SK-N-SH (cell line): ENCODE measurements at regions of chr5 and their contacts with region 1.

Region 1: GRCh38 chr5:74640450-74640953 is at the start of gene ENC1:
- DNase-seq: peak; percentile 88
- H3K4me3 ChIP-seq: peak within 1 kb of the TSS; percentile 84 to 87
- H3K27ac ChIP-seq: peak within 1 kb of the TSS; percentile 90 to 94
- H3K4me1 ChIP-seq: peaks cover 22 to 24% of the 10 kb centered on the region in 2 experiments
- H3K27me3 ChIP-seq: no peaks in the 10 kb centered on the region
- CTCF ChIP-seq: peak; percentile 44
- EP300 ChIP-seq: peak in 1 of 2 experiments; percentile 30; a peak in 1 of 4 replicates
- RAD21 ChIP-seq: peak; percentile 44; the same call in 1 of the 2 replicates
- polyA plus RNA-seq, gene ENC1: 20.3 and 23.9 TPM in 2 replicates

Region 2: GRCh38 chr5:73908395-73908794 is 732.1 kb before region 1 on chr5:
- CTCF ChIA-PET with region 1: interaction called, 124 read pairs
- POLR2A ChIA-PET with region 1: no interaction called
- DNase-seq: peak; percentile 39
- H3K4me3 ChIP-seq: no peak overlapping the region
- H3K27ac ChIP-seq: peak overlapping the region in 1 of 2 experiments; percentile 9; a peak in 1 of 4 replicates
- H3K4me1 ChIP-seq: peaks cover 0 to 6% of the 10 kb centered on the region in 2 experiments; a peak in 3 of 4 replicates
- H3K27me3 ChIP-seq: no peaks in the 10 kb centered on the region
- CTCF ChIP-seq: no peak
- EP300 ChIP-seq: peak in 1 of 2 experiments; percentile 58; a peak in 2 of 4 replicates
- RAD21 ChIP-seq: no peak

Region 3: DNA sequence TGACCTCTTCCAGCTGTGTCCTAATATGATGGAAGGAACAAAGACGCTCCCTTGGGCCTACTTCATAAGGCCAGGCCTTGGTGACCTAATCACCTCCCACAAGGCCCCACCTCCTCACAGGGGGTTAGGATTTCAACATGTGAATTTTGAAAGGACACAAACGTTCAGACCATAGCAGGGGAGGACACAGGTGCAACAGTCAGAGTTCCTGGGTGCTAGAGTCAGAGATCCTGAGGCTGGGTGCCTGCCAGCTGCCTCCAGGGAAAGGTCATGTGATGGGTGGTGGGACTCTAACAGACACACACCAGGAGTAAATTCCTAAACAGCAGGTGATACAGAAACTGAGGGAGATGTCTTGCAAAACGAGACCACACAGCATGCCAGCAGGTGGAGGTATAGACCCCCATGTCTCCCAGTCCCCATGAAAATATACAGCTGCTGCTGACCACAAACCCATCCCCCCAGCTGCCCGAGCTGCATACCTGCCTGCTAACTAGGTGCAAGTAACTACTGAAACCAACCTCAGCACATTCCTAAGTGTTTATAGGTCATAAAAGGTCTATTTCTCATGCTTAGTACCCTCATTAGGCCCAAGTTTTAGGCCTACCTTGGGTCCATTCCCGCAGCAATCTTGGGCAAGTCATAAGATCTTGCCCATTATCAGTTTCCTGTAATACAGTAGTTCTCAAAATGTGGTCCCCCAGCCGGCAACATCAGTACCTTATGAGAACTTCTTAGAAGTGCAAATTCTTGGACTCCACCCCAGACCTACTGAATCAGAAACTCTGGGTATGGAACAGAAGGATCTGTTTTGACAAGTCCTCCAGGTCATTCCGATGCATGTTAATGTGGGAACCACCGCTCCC is 245.4 kb before region 1 on chr5:
- CTCF ChIA-PET with region 1: interaction called, 15 read pairs
- POLR2A ChIA-PET with region 1: no interaction called
- DNase-seq: peak; percentile 19
- H3K4me3 ChIP-seq: no peak overlapping the region
- H3K27ac ChIP-seq: no peak overlapping the region
- H3K4me1 ChIP-seq: peaks cover 7 to 8% of the 10 kb centered on the region in 2 experiments; a peak in 3 of 4 replicates
- H3K27me3 ChIP-seq: no peaks in the 10 kb centered on the region
- CTCF ChIP-seq: no peak
- EP300 ChIP-seq: no peak
- RAD21 ChIP-seq: peak; percentile 46; the same call in 1 of the 2 replicates

Region 4: DNA sequence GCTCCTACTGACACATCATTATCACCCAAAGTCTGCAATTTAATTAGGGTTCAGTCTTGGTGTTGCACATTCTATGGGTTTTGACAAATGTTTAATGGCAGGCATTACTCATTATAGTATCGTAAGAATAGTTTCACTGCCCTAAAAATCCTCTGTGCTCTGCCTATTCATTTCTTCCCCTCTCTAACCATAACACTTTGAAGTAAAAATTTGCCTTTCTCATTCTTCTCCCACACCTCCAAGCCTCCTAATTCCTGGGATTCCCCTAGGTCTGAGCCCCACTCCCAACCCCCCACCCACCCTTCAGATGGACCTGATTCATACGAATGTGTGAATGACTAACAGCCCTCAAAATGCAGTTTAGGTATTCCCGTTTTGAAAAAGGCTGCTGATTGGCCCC is 18.4 kb before region 1 on chr5:
- CTCF ChIA-PET with region 1: interaction called, 19 read pairs
- POLR2A ChIA-PET with region 1: no interaction called
- DNase-seq: no peak
- H3K4me3 ChIP-seq: no peak overlapping the region
- H3K27ac ChIP-seq: no peak overlapping the region
- H3K4me1 ChIP-seq: peaks cover 0 to 18% of the 10 kb centered on the region in 2 experiments; a peak in 2 of 4 replicates
- H3K27me3 ChIP-seq: no peaks in the 10 kb centered on the region
- CTCF ChIP-seq: no peak
- EP300 ChIP-seq: no peak
- RAD21 ChIP-seq: no peak

Region 5: DNA sequence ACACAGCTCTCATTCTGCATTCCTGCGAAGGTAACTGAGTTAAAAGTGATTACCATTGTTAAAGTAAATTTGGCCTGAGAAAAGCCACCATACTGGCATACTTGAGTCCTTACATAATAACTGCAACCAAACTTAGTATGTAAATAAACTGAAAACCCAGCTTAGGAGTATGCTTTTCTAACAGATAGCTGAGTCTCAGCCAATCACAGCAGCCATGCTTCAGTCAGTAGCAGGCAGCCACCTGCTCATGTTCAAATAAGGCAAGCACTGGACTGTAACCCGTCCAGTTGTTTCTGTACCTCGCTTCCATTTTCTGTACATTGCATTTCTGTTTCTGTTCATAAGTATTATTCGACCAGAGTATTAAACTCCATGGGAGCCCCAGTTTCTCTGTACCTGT is 353.2 kb after region 1 on chr5:
- CTCF ChIA-PET with region 1: no interaction called
- POLR2A ChIA-PET with region 1: no interaction called
- DNase-seq: no peak
- H3K4me3 ChIP-seq: no peak overlapping the region
- H3K27ac ChIP-seq: no peak overlapping the region
- H3K4me1 ChIP-seq: no peaks in the 10 kb centered on the region; a peak in 1 of 4 replicates
- H3K27me3 ChIP-seq: no peaks in the 10 kb centered on the region; the same call in 1 of the 2 replicates
- CTCF ChIP-seq: no peak
- EP300 ChIP-seq: no peak
- RAD21 ChIP-seq: no peak